Activated naive CD4-positive, alpha-beta T cell treated with anti-CD3 and anti-CD28 coated beads for 36 hours (primary cell): ENCODE measurements at regions of chr5 and their contacts with region 1.

Region 1: GRCh38 chr5:139392678-139393496 is 2.0 kb downstream of the PROB1 start:
- DNase-seq: peak; percentile 86
- H3K4me3 Mint-ChIP-seq: peak overlapping the region; percentile 89
- H3K27ac Mint-ChIP-seq: peak overlapping the region; percentile 78
- H3K4me1 Mint-ChIP-seq: peaks cover 39% of the 10 kb centered on the region
- H3K27me3 Mint-ChIP-seq: no peaks in the 10 kb centered on the region

Region 2: GRCh38 chr5:139246394-139246793 is 146.5 kb before region 1 on chr5:
- CTCF ChIA-PET with region 1: no interaction called
- intact Hi-C with region 1: loop called (anchors 2 kb)
- DNase-seq: peak; percentile 79
- H3K4me3 Mint-ChIP-seq: no peak overlapping the region
- H3K27ac Mint-ChIP-seq: peak overlapping the region; percentile 70
- H3K4me1 Mint-ChIP-seq: peaks cover 22% of the 10 kb centered on the region
- H3K27me3 Mint-ChIP-seq: no peaks in the 10 kb centered on the region

Region 3: DNA sequence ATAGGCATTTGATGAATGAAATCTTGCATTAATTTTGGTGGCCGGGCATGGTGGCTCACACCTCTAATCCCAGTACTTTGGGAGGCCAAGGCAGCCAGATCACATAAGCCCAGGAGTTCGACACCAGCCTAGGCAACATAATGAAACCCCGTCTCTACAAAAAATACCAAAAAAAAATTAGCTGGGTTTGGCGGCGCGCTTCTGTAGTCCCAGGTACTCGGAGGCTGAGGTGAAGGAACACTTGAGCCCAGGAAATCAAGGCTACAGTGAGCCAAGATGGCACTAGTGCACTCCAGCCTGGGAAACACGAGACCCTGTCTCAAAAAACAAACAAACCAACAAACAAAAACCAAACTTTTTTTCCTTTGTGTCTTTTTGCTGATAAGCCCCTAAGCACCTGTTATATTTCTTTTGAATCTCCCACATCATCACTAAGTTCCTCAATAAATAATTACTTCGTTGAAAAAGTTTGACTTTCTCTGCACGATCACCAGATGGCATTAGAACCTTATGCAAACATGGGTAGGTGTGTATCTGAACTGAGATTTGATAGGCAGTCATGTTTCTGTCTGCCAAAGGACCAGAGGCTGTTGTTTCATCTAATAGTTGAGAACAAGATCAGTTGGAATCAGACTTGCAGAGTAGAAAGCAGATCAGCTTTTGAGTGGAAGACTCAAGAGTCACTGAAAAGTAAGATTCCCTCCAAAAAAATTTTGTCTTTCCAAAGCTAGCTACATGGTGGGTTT is 104.8 kb before region 1 on chr5:
- CTCF ChIA-PET with region 1: no interaction called
- intact Hi-C with region 1: loop called (anchors 1 kb)
- DNase-seq: no peak
- H3K4me3 Mint-ChIP-seq: no peak overlapping the region
- H3K27ac Mint-ChIP-seq: no peak overlapping the region
- H3K4me1 Mint-ChIP-seq: no peaks in the 10 kb centered on the region
- H3K27me3 Mint-ChIP-seq: no peaks in the 10 kb centered on the region

Region 4: DNA sequence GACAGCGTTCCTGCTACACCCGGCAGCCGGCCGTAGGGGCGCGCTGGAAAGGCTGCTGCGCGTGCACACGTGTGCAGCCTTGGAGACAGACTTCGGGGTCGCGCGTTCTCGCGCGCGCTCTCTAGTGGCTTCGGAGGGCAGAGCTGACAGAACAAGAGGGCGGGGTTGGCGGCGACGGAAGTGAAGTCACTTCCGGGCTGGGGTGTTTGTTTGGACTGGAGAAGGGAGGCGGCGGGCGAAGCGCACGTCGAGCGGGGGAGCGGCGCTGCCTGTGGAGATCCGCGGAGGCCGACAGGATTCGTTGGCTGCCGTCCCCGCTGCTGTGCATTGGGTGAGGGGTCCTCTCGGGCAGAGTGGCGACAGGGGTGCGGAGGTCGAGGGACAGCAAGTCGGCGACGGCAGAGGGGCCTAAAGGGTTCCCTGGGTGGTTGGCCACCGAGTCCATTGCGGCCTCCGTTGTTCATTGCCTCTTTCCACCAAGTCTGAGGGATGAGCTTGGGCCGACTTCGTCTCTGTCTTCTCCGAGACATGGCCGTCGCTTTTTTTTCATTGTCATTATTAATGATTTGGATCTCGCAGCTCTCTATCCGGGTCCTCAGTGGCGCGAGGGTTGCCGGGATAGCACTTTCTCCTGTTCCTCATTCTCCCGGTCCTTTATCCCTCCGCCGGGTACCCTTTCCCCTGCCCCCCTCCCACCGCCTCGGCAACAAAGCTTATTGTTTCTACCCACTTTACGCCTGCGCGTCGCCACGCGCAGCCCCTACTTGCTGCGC is 51.1 kb before region 1 on chr5 and contains the start of gene PAIP2:
- CTCF ChIA-PET with region 1: no interaction called
- intact Hi-C with region 1: loop called (anchors 1 kb)
- DNase-seq: peak; percentile 99
- H3K4me3 Mint-ChIP-seq: peak within 1 kb of the TSS; percentile 100
- H3K27ac Mint-ChIP-seq: peak within 1 kb of the TSS; percentile 99
- H3K4me1 Mint-ChIP-seq: peaks cover 48% of the 10 kb centered on the region
- H3K27me3 Mint-ChIP-seq: no peaks in the 10 kb centered on the region
- total RNA-seq, gene PAIP2: 68.8 to 74.3 TPM